H1 (cell line): ENCODE measurements at regions of chr12 and their contacts with region 1.

Region 1: GRCh38 chr12:122929812-122930211 is 33.9 kb upstream of the VPS37B start:
- DNase-seq: no peak
- H3K4me3 ChIP-seq: no peak overlapping the region
- H3K27ac ChIP-seq: no peak overlapping the region
- H3K4me1 ChIP-seq: no peaks in the 10 kb centered on the region; a peak in 1 of 7 replicates
- H3K27me3 ChIP-seq: no peaks in the 10 kb centered on the region
- CTCF ChIP-seq: no peak
- EP300 ChIP-seq: no peak
- POLR2A ChIP-seq: no peak
- RAD21 ChIP-seq: no peak

Region 2: GRCh38 chr12:122951979-122952892 is 22.4 kb after region 1 on chr12:
- CTCF ChIA-PET with region 1: interaction called, 12 read pairs
- POLR2A ChIA-PET with region 1: no interaction called
- DNase-seq: peak in 1 of 2 experiments; percentile 73
- H3K4me3 ChIP-seq: no peak overlapping the region
- H3K27ac ChIP-seq: no peak overlapping the region
- H3K4me1 ChIP-seq: no peaks in the 10 kb centered on the region
- H3K27me3 ChIP-seq: no peaks in the 10 kb centered on the region
- CTCF ChIP-seq: peak; percentile 94 to 97 (median 95)
- EP300 ChIP-seq: no peak
- POLR2A ChIP-seq: no peak
- RAD21 ChIP-seq: peak; percentile 96 to 98